Mammary epithelial cell (primary cell): ENCODE measurements at regions of chr6 and their contacts with region 1.

Region 1: GRCh38 chr6:593139-593906 is 63.6 kb downstream of the HUS1B start:
- DNase-seq: peak; percentile 26
- H3K4me3 ChIP-seq: no peak overlapping the region
- H3K27ac ChIP-seq: no peak overlapping the region
- H3K4me1 ChIP-seq: no peaks in the 10 kb centered on the region
- H3K27me3 ChIP-seq: no peaks in the 10 kb centered on the region
- CTCF ChIP-seq: peak; percentile 51 to 65

Region 2: DNA sequence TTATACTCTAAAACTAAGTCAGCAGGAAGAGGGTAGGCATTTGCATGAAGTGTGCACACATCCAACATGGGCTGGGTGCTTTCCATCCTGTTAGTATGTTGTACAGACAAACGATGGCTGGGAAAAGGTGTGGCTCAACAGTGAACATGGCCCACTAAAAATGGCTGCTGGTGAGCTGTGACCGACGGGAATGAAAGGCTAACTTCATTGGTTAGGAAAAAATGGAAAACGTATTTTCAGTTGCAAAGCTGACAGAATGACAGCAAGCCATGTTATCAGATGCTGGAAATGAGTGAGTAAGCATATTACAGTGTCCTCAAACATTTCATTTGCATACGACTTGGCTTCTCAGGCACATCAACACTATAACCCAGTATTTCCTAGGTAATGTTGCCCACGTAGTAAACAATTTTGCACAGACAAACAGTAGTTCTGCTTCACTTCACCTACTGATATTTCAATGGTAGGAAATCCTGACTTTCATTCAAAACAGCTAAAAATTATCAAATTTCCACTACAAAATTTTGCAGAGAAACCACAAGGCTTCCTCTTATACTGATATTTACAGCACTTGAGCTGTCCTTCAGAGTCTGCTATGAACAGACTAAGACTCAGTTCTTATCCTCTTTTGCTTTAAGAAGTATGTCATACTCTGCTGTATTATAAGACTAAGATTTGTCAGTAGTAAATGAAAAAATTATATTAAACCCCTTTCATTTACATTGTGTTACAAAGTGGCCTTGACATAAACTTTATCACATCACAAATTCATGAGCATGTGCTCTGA is 102.9 kb before region 1 on chr6:
- CTCF ChIA-PET with region 1: no interaction called
- dilution Hi-C with region 1: no loop called
- in situ Hi-C with region 1: no loop called
- intact Hi-C with region 1: no loop called
- DNase-seq: no peak
- H3K4me3 ChIP-seq: no peak overlapping the region
- H3K27ac ChIP-seq: no peak overlapping the region
- H3K4me1 ChIP-seq: no peaks in the 10 kb centered on the region
- H3K27me3 ChIP-seq: no peaks in the 10 kb centered on the region
- CTCF ChIP-seq: no peak

Region 3: DNA sequence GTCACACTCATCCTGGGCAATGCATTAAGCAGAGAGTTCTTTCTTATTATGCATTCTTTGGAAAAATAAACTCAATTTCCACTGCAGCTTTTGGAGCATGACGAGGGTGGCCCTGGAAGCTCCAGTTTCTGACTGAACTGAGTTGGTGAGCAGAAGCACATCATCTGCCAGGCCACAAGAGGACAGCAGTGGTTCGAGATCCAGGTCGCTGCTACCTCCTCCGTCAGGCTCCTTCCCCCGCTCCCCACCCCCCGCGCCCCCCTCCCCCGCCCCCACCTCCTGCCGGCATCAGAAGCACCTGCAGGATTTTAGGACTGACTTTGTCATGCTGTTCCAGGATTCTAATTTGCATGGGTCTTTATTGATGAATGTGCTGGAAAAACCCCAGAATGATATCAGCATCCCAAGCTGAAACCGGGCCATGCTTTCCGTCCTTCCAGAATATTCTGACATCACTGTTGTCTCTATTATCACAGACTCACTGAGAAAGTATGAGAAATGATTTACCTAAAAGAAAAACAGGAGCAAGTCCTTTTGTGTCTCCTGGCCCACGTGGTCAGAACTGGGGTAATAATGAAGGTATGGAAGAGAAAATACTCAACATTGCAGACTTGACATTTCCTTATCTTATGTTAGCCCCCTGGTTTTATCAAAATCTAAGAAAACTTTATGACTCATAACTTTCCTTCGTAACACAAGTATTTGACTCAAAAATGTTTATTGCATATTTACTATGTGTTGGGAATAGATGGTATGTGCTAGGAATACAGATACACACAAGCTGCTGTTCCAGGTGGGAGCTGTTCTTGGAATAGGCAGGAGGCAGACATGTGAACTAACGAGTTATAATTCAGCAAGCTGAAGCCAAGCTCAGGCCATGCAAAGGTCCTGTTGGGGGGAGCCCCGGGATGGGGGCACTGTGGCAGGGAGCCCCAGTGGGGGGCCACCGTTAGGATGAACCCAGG is 319.8 kb after region 1 on chr6:
- CTCF ChIA-PET with region 1: no interaction called
- dilution Hi-C with region 1: loop called (anchors 10 kb)
- in situ Hi-C with region 1: no loop called
- intact Hi-C with region 1: no loop called
- DNase-seq: peak; percentile 7
- H3K4me3 ChIP-seq: no peak overlapping the region
- H3K27ac ChIP-seq: no peak overlapping the region
- H3K4me1 ChIP-seq: no peaks in the 10 kb centered on the region
- H3K27me3 ChIP-seq: no peaks in the 10 kb centered on the region
- CTCF ChIP-seq: peak; percentile 60 to 81

Region 4: DNA sequence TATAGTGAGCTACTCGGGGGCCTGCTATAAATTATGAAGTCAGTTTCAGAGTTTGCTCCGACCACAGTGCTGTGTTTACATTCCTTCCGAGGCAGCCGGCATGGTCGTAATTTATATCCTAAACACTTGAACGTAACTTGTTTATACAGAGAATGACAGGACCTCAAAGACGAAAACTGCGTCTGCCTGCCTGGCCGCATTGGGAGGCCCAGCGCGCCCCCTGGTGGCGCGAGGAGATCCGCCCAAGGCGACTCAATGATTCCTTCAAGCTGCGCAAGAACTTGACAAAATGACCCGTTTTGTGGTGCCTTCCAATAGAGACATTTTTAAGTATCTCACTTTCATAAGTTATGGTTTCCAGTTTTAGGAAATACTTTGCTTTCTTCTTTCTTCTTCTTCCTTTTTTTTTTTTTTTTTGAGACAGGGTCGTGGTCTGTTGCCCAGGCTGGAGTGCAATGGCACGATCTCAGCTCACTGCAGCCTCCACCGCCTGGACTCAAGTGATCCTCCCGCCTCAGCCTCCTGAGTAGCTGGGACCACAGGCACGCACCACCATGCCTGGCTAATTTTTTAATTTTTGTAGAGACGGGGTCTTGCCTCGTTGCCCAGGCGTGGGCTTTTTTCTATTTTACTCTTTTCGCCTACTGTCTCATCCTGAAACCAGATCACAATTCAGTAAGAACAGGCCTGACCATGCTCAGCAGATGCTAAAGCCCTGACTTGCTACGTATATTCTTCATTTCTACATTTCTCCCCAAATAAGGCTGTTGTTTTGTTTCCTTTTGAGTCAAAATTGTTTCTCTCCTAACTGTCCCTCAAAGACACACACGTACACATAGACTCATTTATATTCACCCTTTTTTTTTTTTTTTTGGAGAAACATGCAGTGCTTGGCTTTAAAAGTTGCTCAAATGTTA is 803.9 kb after region 1 on chr6:
- CTCF ChIA-PET with region 1: no interaction called
- dilution Hi-C with region 1: no loop called
- in situ Hi-C with region 1: loop called in 1 of 2 experiments (anchors 25 kb)
- intact Hi-C with region 1: loop called (anchors 2 kb)
- DNase-seq: peak; percentile 46
- H3K4me3 ChIP-seq: no peak overlapping the region
- H3K27ac ChIP-seq: no peak overlapping the region
- H3K4me1 ChIP-seq: peaks cover 5% of the 10 kb centered on the region
- H3K27me3 ChIP-seq: peaks cover 23% of the 10 kb centered on the region
- CTCF ChIP-seq: peak; percentile 95 to 98